A673 (cell line): ENCODE measurements at regions of chr1 and their contacts with region 1.

Region 1: GRCh38 chr1:204858363-204858821 is 12.3 kb upstream of the NFASC start:
- DNase-seq: no peak
- H3K4me3 ChIP-seq: no peak overlapping the region
- H3K27ac ChIP-seq: no peak overlapping the region
- H3K4me1 ChIP-seq: no peaks in the 10 kb centered on the region
- H3K27me3 ChIP-seq: peaks cover 20% of the 10 kb centered on the region
- CTCF ChIP-seq: no peak

Region 2: GRCh38 chr1:204588824-204589223 is 269.6 kb before region 1 on chr1:
- CTCF ChIA-PET with region 1: interaction called, 13 read pairs
- POLR2A ChIA-PET with region 1: no interaction called
- intact Hi-C with region 1: no loop called
- DNase-seq: no peak
- H3K4me3 ChIP-seq: no peak overlapping the region
- H3K27ac ChIP-seq: no peak overlapping the region
- H3K4me1 ChIP-seq: peaks cover 10% of the 10 kb centered on the region
- H3K27me3 ChIP-seq: no peaks in the 10 kb centered on the region
- CTCF ChIP-seq: no peak